ENCODE measurements at regions of chr3 and their contacts with region 1.

Region 1: DNA sequence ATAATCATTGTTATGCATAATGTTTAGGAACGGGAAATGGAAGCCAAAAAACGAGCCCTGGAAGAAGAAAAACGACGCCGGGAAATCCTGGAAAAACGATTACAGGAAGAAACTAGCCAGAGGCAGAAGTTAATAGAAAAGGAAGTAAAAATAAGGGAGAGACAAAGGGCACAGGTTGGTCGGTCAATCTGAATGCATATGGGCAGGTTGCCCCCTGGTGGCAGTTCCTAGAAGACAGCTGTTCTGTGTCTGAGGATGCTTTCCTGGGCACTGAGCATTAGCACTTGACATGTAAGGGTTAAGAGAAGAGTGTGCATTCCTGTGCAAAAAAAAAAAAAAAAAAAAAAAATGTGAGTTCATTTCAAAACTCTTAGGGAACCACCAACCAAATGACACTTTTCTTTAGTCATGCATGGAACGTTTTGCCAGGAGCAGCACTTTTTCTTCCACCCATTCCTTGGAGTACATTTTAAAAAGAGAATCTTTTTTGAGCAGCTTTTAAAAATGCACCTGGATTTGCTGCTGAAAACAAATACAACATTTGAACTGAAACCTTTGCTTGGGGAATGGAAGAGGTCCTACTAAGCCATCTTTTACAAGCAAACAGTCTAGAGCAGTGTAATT is 11.1 kb upstream of the ABHD10 start:
- DNase-seq: peak; percentile 76 to 83
- ATAC-seq: peak; percentile 84 to 95 (median 90)
- H3K4me3 ChIP-seq: no peak overlapping the region
- H3K27ac ChIP-seq: no peak overlapping the region
- H3K4me1 ChIP-seq: peaks cover 3% of the 10 kb centered on the region
- H3K27me3 ChIP-seq: no peaks in the 10 kb centered on the region
- CTCF ChIP-seq: peak; percentile 93

Region 2: GRCh38 chr3:111668912-111669488 is 298.8 kb before region 1 on chr3:
- intact Hi-C with region 1: loop called (anchors 5 kb)
- DNase-seq: no peak
- ATAC-seq: peak; percentile 51 to 88 (median 70)
- H3K4me3 ChIP-seq: no peak overlapping the region
- H3K27ac ChIP-seq: no peak overlapping the region
- H3K4me1 ChIP-seq: peaks cover 3% of the 10 kb centered on the region
- H3K27me3 ChIP-seq: no peaks in the 10 kb centered on the region
- CTCF ChIP-seq: peak; percentile 81

Region 3: GRCh38 chr3:111717601-111718000 is 250.2 kb before region 1 on chr3:
- intact Hi-C with region 1: loop called (anchors 1 kb)
- DNase-seq: peak; percentile 63 to 80
- ATAC-seq: peak; percentile 94 to 99 (median 96)
- H3K4me3 ChIP-seq: no peak overlapping the region
- H3K27ac ChIP-seq: no peak overlapping the region
- H3K4me1 ChIP-seq: peaks cover 4% of the 10 kb centered on the region
- H3K27me3 ChIP-seq: no peaks in the 10 kb centered on the region
- CTCF ChIP-seq: peak; percentile 98

Region 4: DNA sequence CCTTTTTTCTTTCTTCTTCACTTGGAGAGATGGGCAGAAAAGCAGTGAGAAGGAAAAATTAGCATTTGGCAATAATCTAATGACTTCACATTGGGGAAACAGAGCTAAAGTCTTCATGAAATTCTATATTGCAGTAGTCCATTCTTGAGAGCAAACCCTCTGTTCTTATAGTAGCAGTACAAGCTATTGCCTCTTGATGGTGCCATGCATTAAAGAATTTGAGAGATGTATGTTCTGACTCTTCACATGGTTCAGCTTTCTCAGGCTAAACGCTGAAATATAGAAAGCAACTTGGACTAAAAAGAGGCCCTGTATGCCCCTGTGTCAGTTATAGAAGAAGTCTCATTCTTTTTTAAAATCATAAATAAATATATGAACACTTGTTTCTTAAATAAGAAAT is 72.7 kb before region 1 on chr3:
- intact Hi-C with region 1: loop called in 1 of 2 experiments (anchors 2 kb)
- DNase-seq: no peak
- ATAC-seq: peak; percentile 58 to 78 (median 68)
- H3K4me3 ChIP-seq: no peak overlapping the region
- H3K27ac ChIP-seq: no peak overlapping the region
- H3K4me1 ChIP-seq: no peaks in the 10 kb centered on the region
- H3K27me3 ChIP-seq: no peaks in the 10 kb centered on the region
- CTCF ChIP-seq: peak; percentile 53